Prostate gland (tissue), 2 donors: ENCODE measurements at regions of chr4 and their contacts with region 1.

Region 1: GRCh38 chr4:38179690-38180377 is 219.6 kb downstream of the PTTG2 start:
- DNase-seq: peak; percentile 86
- H3K4me3 ChIP-seq: no peak overlapping the region
- H3K27ac ChIP-seq: peak overlapping the region in 1 of 2 donors; percentile 12
- H3K4me1 ChIP-seq: peaks cover 12% of the 10 kb centered on the region
- H3K27me3 ChIP-seq: no peaks in the 10 kb centered on the region
- CTCF ChIP-seq: peak; percentile 86 to 94 (median 92)
- POLR2A ChIP-seq: no peak

Region 2: GRCh38 chr4:38062088-38062893 is 117.5 kb before region 1 on chr4:
- intact Hi-C with region 1: loop called (anchors 2 kb)
- DNase-seq: peak; percentile 80
- H3K4me3 ChIP-seq: peak overlapping the region; percentile 24
- H3K27ac ChIP-seq: peak overlapping the region; percentile 33 to 59
- H3K4me1 ChIP-seq: no peaks in the 10 kb centered on the region
- H3K27me3 ChIP-seq: no peaks in the 10 kb centered on the region
- CTCF ChIP-seq: peak; percentile 69 to 83 (median 76)
- POLR2A ChIP-seq: no peak

Region 3: DNA sequence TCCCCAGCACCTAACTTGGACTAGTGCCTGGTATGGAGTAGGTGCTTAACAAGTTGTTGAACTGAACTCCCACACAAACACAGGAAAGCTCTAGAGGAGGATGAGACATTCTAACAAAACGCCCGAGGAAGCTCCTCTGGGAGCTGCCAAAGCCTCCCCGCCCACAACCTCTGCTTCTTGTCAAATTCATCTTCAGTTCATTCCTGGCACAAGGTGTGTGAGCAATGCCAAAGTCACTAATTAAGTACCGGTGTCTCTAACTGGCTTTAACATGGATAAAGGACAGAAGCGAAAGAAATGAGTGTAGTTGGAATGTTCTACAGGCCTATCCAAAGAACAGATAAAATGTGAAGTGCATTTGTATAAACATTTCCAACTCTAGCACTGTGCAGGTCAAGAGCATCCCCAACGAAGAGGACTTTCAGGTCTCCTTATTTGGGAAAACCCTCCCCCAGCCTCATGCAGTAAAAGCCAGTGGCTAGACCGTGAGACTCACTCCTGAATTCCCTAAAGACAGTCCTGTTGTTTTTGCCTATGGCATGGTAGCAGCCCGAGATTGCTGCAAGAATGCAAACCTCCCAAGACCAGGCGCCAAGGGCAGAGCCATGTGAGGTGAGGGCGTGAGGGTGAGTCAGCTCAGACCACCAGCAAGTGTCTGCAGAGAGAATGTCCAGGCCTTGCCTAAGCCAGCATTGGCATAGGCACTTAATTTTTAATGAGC is 411.9 kb after region 1 on chr4:
- intact Hi-C with region 1: no loop called
- DNase-seq: no peak
- H3K4me3 ChIP-seq: no peak overlapping the region
- H3K27ac ChIP-seq: no peak overlapping the region
- H3K4me1 ChIP-seq: no peaks in the 10 kb centered on the region
- H3K27me3 ChIP-seq: no peaks in the 10 kb centered on the region
- CTCF ChIP-seq: no peak
- POLR2A ChIP-seq: no peak

Region 4: DNA sequence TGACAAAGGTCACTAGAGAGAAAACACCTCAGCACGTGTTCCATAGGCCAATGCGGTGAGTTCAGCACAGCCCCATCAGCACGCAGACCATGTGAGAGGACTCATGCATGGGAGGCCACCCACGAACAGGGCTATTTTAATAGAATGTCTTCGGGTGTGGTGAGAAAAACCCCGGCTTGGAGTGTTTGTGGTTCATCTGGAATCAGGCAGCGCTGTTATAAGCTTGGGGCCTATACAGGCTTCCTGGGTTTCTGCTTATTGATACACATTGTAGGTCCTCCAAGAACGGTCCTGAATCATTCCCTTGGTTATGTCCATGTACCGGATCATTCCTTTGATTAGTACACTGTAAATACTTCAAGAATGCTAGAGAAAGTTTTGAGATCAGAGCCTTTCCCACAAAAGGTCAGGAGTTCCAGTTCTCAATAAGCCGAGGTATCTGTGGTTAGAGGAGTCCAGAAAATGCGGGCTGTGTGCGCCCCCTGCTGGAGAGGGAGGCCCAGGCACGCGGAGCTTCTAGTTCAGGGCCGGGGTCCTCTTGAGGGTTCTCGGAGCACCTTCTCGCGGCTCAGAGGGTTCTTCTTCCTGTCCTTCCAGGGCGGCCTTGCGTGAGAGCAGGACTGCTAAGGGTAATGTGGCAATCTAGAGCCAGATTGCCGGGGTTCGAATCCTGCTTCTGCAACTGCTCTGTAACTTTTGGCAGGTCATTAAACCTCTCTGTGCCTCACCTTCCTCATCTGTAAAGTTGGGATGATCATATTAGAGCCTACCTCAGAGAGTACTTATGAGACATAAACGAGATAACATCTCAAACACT is 551.2 kb after region 1 on chr4:
- intact Hi-C with region 1: loop called (anchors 1 kb)
- DNase-seq: peak; percentile 73
- H3K4me3 ChIP-seq: no peak overlapping the region
- H3K27ac ChIP-seq: no peak overlapping the region
- H3K4me1 ChIP-seq: no peaks in the 10 kb centered on the region
- H3K27me3 ChIP-seq: no peaks in the 10 kb centered on the region
- CTCF ChIP-seq: peak; percentile 91 to 94 (median 92)
- POLR2A ChIP-seq: no peak